ENCODE measurements at regions of chr21 and their contacts with region 1.

Region 1: DNA sequence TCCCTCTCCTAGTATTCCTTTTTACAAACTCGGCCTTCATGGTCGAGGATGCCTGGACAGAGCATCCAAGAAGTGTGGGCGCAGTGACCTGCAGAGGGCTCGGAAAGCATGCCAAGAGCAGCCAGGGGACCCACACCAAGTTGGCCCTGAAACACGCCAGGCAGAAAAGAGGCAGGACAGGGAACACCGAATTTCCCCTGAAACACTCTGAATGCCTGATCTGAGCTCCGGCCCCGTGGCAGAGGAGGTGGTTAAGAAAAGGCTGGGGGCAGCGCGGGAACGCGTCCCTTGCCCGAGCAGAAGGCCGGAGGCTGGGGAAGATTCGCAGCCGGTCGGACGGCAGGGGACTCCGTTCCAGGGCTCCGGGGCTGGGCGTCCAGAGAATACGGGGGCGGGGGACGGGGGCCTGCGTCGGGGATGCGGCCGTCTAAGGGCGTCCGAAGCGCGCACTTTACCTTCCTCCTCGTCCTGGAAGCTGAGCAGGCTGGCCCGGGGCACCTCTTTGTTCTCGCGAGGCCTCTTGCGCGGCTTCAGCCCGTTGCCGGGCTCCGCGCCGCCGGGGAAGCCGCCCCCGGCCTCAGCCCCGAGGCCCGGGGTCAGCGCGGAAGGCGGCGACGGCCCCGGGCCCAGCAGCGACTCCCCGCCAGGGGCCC is 558 bp downstream of the PAXBP1 start:
- DNase-seq: peak in 3 of 5 donors; percentile 41 to 73 (median 44)
- H3K4me3 ChIP-seq: peak overlapping the region; percentile 71
- H3K4me3 Mint-ChIP-seq: peak overlapping the region; percentile 93 to 99 (median 97)
- H3K27ac ChIP-seq: peak overlapping the region; percentile 73
- H3K27ac Mint-ChIP-seq: peak overlapping the region; percentile 82 to 98 (median 94)
- H3K4me1 ChIP-seq: peaks cover 47% of the 10 kb centered on the region
- H3K4me1 Mint-ChIP-seq: peaks cover 65 to 71% (median 67%) of the 10 kb centered on the region in 3 donors
- H3K27me3 ChIP-seq: no peaks in the 10 kb centered on the region
- H3K27me3 Mint-ChIP-seq: peaks cover 0 to 8% of the 10 kb centered on the region in 2 donors

Region 2: GRCh38 chr21:32727687-32728455 is 43.1 kb before region 1 on chr21 and contains the start of gene SYNJ1:
- CTCF ChIA-PET with region 1: interaction called, 21 read pairs
- POLR2A ChIA-PET with region 1: interaction called, 21 read pairs
- DNase-seq: peak; percentile 92 to 96 (median 94)
- H3K4me3 ChIP-seq: peak within 1 kb of the TSS; percentile 92
- H3K4me3 Mint-ChIP-seq: peak within 1 kb of the TSS; percentile 93 to 98 (median 96)
- H3K27ac ChIP-seq: peak within 1 kb of the TSS; percentile 85
- H3K27ac Mint-ChIP-seq: peak within 1 kb of the TSS; percentile 83 to 99 (median 97)
- H3K4me1 ChIP-seq: peaks cover 42% of the 10 kb centered on the region
- H3K4me1 Mint-ChIP-seq: peaks cover 32 to 72% (median 63%) of the 10 kb centered on the region in 3 donors
- H3K27me3 ChIP-seq: no peaks in the 10 kb centered on the region
- H3K27me3 Mint-ChIP-seq: no peaks in the 10 kb centered on the region
- total RNA-seq, gene SYNJ1: 11.4 to 14.4 TPM

Region 3: DNA sequence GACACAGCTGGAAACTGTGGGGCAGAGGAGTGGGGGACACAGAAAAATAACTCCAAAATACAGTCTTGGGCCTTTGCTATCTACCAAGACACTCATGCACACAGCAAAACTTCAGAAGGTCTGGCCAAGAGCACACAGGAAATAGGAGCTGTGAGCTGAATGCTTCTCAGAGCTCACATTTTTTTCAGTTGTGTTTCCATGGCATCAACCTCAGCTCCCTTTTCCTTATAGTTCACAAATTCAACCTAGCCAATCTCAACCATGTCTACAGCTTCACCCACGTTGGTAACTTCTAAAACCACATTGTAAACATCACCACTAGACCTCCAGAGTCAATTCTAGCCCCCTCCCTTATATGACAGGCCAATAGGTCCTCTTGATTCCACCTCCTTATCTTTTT is 23.6 kb before region 1 on chr21:
- CTCF ChIA-PET with region 1: interaction called, 12 read pairs
- POLR2A ChIA-PET with region 1: interaction called, 7 read pairs
- DNase-seq: no peak
- H3K4me3 ChIP-seq: no peak overlapping the region
- H3K4me3 Mint-ChIP-seq: no peak overlapping the region
- H3K27ac ChIP-seq: no peak overlapping the region
- H3K27ac Mint-ChIP-seq: peak overlapping the region in 5 of 8 donors; percentile 8 to 79 (median 48)
- H3K4me1 ChIP-seq: peaks cover 6% of the 10 kb centered on the region
- H3K4me1 Mint-ChIP-seq: peaks cover 7 to 14% (median 10%) of the 10 kb centered on the region in 3 donors
- H3K27me3 ChIP-seq: no peaks in the 10 kb centered on the region
- H3K27me3 Mint-ChIP-seq: no peaks in the 10 kb centered on the region

Region 4: DNA sequence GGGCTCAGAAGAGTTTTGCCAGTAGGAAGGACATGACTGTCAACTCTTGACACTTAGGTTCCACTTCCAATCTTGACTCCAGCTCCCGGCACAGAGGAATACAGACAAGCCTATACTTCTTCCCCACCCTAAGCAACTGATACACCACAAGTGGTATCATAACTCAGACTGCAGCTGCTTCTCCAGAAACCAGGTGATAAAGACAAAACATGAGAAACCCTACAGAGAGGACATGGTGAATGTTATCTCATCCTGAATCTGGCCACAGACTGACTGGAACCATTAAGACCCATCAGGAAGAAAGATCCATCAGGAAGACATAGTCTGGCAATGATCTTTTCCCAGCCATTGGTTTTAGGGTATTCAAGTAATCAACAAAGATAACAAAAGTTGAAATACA is 13.2 kb before region 1 on chr21:
- CTCF ChIA-PET with region 1: interaction called, 14 read pairs
- POLR2A ChIA-PET with region 1: no interaction called
- DNase-seq: no peak
- H3K4me3 ChIP-seq: no peak overlapping the region
- H3K4me3 Mint-ChIP-seq: peak overlapping the region in 1 of 7 donors; percentile 27
- H3K27ac ChIP-seq: no peak overlapping the region
- H3K27ac Mint-ChIP-seq: peak overlapping the region in 2 of 8 donors; percentile 11 to 43
- H3K4me1 ChIP-seq: no peaks in the 10 kb centered on the region
- H3K4me1 Mint-ChIP-seq: peaks cover 6 to 10% (median 8%) of the 10 kb centered on the region in 3 donors
- H3K27me3 ChIP-seq: no peaks in the 10 kb centered on the region
- H3K27me3 Mint-ChIP-seq: no peaks in the 10 kb centered on the region

Region 5: GRCh38 chr21:32803651-32804050 is 32.7 kb after region 1 on chr21:
- CTCF ChIA-PET with region 1: no interaction called
- POLR2A ChIA-PET with region 1: no interaction called
- DNase-seq: no peak
- H3K4me3 ChIP-seq: no peak overlapping the region
- H3K4me3 Mint-ChIP-seq: no peak overlapping the region
- H3K27ac ChIP-seq: no peak overlapping the region
- H3K27ac Mint-ChIP-seq: no peak overlapping the region
- H3K4me1 ChIP-seq: no peaks in the 10 kb centered on the region
- H3K4me1 Mint-ChIP-seq: peaks cover 4 to 6% (median 6%) of the 10 kb centered on the region in 3 donors
- H3K27me3 ChIP-seq: no peaks in the 10 kb centered on the region
- H3K27me3 Mint-ChIP-seq: peaks cover 0 to 7% of the 10 kb centered on the region in 2 donors

Region 6: GRCh38 chr21:32886339-32886738 is 115.3 kb after region 1 on chr21:
- CTCF ChIA-PET with region 1: no interaction called
- POLR2A ChIA-PET with region 1: no interaction called
- DNase-seq: peak in 4 of 5 donors; percentile 6 to 60 (median 17)
- H3K4me3 ChIP-seq: peak overlapping the region; percentile 62
- H3K4me3 Mint-ChIP-seq: peak overlapping the region; percentile 68 to 95 (median 88)
- H3K27ac ChIP-seq: peak overlapping the region; percentile 26
- H3K27ac Mint-ChIP-seq: peak overlapping the region; percentile 19 to 94 (median 88)
- H3K4me1 ChIP-seq: peaks cover 16% of the 10 kb centered on the region
- H3K4me1 Mint-ChIP-seq: peaks cover 15 to 19% (median 19%) of the 10 kb centered on the region in 3 donors
- H3K27me3 ChIP-seq: no peaks in the 10 kb centered on the region
- H3K27me3 Mint-ChIP-seq: peaks cover 0 to 4% of the 10 kb centered on the region in 2 donors

Region 7: GRCh38 chr21:32955311-32956060 is 184.5 kb after region 1 on chr21:
- CTCF ChIA-PET with region 1: no interaction called
- POLR2A ChIA-PET with region 1: no interaction called
- DNase-seq: no peak
- H3K4me3 ChIP-seq: no peak overlapping the region
- H3K4me3 Mint-ChIP-seq: no peak overlapping the region
- H3K27ac ChIP-seq: no peak overlapping the region
- H3K27ac Mint-ChIP-seq: no peak overlapping the region
- H3K4me1 ChIP-seq: no peaks in the 10 kb centered on the region
- H3K4me1 Mint-ChIP-seq: no peaks in the 10 kb centered on the region
- H3K27me3 ChIP-seq: peaks cover 4% of the 10 kb centered on the region
- H3K27me3 Mint-ChIP-seq: peaks cover 31 to 70% of the 10 kb centered on the region in 2 donors

Region 8: GRCh38 chr21:33608559-33608958 is 837.6 kb after region 1 on chr21:
- CTCF ChIA-PET with region 1: no interaction called
- POLR2A ChIA-PET with region 1: no interaction called
- DNase-seq: no peak
- H3K4me3 ChIP-seq: no peak overlapping the region
- H3K4me3 Mint-ChIP-seq: no peak overlapping the region
- H3K27ac ChIP-seq: no peak overlapping the region
- H3K27ac Mint-ChIP-seq: peak overlapping the region in 2 of 8 donors; percentile 17 to 30
- H3K4me1 ChIP-seq: no peaks in the 10 kb centered on the region
- H3K4me1 Mint-ChIP-seq: peaks cover 0 to 3% (median 3%) of the 10 kb centered on the region in 3 donors
- H3K27me3 ChIP-seq: no peaks in the 10 kb centered on the region
- H3K27me3 Mint-ChIP-seq: no peaks in the 10 kb centered on the region

Measured in CD8-positive, alpha-beta memory T cell (primary cell).